Esophagus squamous epithelium (tissue), 5 donors: ENCODE measurements at regions of chr10 and their contacts with region 1.

Region 1: GRCh38 chr10:3482200-3483138 is 302.5 kb downstream of the KLF6 start:
- DNase-seq: no peak
- H3K4me3 ChIP-seq: peak overlapping the region in 1 of 4 donors; percentile 48
- H3K27ac ChIP-seq: peak overlapping the region; percentile 67 to 84 (median 82)
- H3K4me1 ChIP-seq: peaks cover 17 to 68% (median 37%) of the 10 kb centered on the region in 3 donors
- H3K27me3 ChIP-seq: no peaks in the 10 kb centered on the region
- CTCF ChIP-seq: no peak
- POLR2A ChIP-seq: peak in 2 of 4 donors; percentile 25 to 39

Region 2: GRCh38 chr10:3426190-3426701 is 56.2 kb before region 1 on chr10:
- intact Hi-C with region 1: no loop called
- DNase-seq: no peak
- H3K4me3 ChIP-seq: no peak overlapping the region
- H3K27ac ChIP-seq: peak overlapping the region; percentile 37 to 81 (median 54)
- H3K4me1 ChIP-seq: peaks cover 7 to 28% (median 26%) of the 10 kb centered on the region in 3 donors
- H3K27me3 ChIP-seq: no peaks in the 10 kb centered on the region
- CTCF ChIP-seq: no peak
- POLR2A ChIP-seq: no peak

Region 3: DNA sequence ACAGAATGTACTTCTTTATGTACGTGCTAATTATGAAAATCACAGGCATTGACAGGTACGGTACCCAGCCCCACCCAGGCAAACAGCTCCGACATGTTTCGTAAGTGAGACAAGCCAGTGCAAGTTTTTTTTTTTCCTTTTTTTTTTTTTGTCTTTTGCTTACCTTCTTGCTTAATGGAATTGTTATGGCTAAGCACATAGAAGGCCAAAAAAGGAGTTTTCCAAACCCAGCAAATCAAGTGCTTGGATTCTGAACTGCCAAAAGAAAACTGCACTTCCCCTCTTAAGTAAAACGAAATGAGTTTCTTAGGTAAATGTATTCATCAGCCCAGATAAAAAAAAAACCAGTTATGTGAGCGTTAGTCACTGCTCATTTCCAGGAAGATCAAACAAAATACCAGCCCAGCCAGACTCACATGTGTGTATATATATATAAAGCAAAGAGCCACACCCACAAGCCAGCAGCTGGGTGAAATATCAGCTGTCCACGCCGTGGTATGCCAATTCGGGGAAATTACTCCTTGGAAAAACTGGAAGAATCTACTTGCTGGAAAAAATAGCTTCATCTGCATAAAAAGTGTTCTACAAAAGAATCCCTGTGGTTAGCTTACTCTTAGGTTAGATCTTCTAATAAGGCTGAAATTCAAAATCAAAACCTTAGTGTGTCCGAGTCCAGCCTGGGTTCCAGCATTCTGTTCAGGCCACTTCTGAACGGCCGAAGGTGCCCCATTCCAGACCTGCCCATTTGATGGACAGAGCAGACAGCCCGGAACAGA is 294.5 kb after region 1 on chr10:
- intact Hi-C with region 1: loop called (anchors 10 kb)
- DNase-seq: no peak
- H3K4me3 ChIP-seq: peak overlapping the region in 2 of 4 donors; percentile 15 to 21
- H3K27ac ChIP-seq: peak overlapping the region; percentile 88 to 100 (median 99)
- H3K4me1 ChIP-seq: peaks cover 55 to 81% (median 64%) of the 10 kb centered on the region in 3 donors
- H3K27me3 ChIP-seq: no peaks in the 10 kb centered on the region
- CTCF ChIP-seq: no peak
- POLR2A ChIP-seq: no peak